HepG2 (cell line): ENCODE measurements at regions of chr5 and their contacts with region 1.

Region 1: DNA sequence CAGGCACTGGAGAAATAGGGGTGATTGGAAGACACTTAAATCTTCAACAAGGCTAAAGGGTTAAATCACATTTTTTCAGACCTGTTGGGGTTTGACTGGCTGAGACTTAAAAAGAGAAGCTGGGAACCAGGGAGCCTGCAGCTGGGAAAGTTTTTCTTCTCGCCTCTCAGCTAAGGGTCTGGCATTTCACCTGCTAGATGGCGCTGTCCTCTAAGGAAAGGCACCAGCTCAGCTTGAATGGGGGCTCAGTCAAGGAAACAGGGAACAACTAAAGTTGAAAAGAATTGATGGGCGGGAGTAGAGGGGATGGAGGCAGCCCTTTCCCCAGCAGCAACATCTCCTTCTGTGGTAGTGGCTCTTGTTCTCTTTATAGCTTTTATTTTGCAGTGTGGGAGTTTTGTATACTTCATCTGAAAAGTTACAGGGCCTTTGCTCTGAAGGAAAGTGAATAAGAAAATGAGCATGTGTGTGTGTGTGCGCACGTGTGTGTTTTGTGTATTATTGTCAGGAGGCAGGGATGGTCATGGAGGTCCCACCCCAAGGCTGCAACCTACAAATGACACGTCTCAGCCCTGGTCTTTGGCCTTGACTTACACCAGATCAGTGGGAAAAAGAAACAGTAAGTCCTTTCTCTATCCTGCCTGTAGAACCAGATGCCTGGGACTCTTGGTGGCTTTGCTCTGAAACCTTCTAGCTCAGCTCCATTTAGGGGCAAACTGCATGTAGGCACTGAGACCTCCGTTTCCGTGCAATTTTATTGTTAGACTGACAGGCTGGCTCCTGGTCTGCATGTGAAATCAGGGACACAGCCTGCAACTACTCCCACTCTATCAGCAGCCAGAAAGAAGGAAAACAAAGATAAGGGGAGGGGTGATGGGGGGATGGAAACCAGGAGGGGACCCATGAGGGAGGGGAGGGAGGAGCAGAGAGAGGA is 316.2 kb upstream of the CLINT1 start:
- DNase-seq: peak; percentile 32
- ATAC-seq: peak; percentile 92
- H3K4me3 ChIP-seq: no peak overlapping the region
- H3K27ac ChIP-seq: no peak overlapping the region
- H3K4me1 ChIP-seq: no peaks in the 10 kb centered on the region
- H3K27me3 ChIP-seq: peaks cover 0 to 6% of the 10 kb centered on the region in 2 experiments; a peak in 1 of 5 replicates
- CTCF ChIP-seq: peak; percentile 86
- EP300 ChIP-seq: no peak
- POLR2A ChIP-seq: no peak
- RAD21 ChIP-seq: peak; percentile 71

Region 2: GRCh38 chr5:158152151-158152550 is 23.0 kb before region 1 on chr5:
- CTCF ChIA-PET with region 1: no interaction called
- POLR2A ChIA-PET with region 1: no interaction called
- in situ Hi-C with region 1: no loop called
- intact Hi-C with region 1: no loop called
- DNase-seq: no peak
- ATAC-seq: no peak
- H3K4me3 ChIP-seq: no peak overlapping the region
- H3K27ac ChIP-seq: no peak overlapping the region
- H3K4me1 ChIP-seq: no peaks in the 10 kb centered on the region
- H3K27me3 ChIP-seq: no peaks in the 10 kb centered on the region; a peak in 1 of 5 replicates
- CTCF ChIP-seq: no peak
- EP300 ChIP-seq: no peak
- POLR2A ChIP-seq: no peak
- RAD21 ChIP-seq: no peak

Region 3: DNA sequence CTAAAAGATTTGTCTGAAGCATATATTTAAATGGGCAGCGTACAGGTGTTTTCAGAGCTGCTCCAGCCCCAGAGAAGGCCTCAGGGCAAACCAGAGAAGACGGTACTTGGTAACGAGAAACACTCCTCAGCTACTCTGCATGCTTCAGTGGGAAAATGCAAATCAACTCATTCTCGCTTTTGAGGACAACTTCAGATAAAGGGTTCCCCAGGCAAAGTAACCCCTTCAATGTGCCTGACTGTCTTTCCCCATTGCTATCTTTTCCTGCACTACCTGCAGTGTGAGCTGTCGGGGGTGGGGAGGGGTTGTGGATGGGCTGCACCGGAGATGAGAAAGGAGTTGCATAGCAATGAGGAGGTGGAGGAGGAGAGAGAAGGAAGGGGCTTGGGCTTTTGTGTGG is 23.5 kb after region 1 on chr5:
- CTCF ChIA-PET with region 1: no interaction called
- POLR2A ChIA-PET with region 1: no interaction called
- in situ Hi-C with region 1: no loop called
- intact Hi-C with region 1: no loop called
- DNase-seq: no peak
- ATAC-seq: no peak
- H3K4me3 ChIP-seq: no peak overlapping the region
- H3K27ac ChIP-seq: no peak overlapping the region
- H3K4me1 ChIP-seq: no peaks in the 10 kb centered on the region
- H3K27me3 ChIP-seq: peaks cover 0 to 2% of the 10 kb centered on the region in 2 experiments; a peak in 2 of 5 replicates
- CTCF ChIP-seq: no peak
- EP300 ChIP-seq: no peak
- POLR2A ChIP-seq: no peak
- RAD21 ChIP-seq: no peak

Region 4: DNA sequence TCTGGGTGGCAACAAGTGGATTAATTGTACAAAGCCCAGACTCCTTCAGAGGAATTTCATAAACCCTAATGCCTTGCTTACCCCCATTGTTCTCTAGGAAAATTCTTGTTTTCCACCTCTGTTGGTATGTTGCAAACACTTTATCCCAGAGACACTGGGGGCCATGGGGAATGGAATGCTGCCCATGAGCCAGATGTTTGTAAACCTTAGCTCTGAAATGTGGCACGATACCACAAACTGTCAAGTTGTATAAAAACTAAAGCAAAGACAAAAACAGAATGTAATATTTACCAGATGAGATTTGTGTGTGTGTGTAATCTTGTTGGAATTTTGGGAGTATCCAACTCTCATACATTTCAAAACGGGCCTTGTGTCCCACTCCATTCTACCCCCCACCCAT is 459.5 kb after region 1 on chr5:
- CTCF ChIA-PET with region 1: no interaction called
- POLR2A ChIA-PET with region 1: no interaction called
- in situ Hi-C with region 1: no loop called
- intact Hi-C with region 1: loop called (anchors 5 kb)
- DNase-seq: no peak
- ATAC-seq: no peak
- H3K4me3 ChIP-seq: no peak overlapping the region
- H3K27ac ChIP-seq: no peak overlapping the region
- H3K4me1 ChIP-seq: no peaks in the 10 kb centered on the region
- H3K27me3 ChIP-seq: no peaks in the 10 kb centered on the region
- CTCF ChIP-seq: no peak
- EP300 ChIP-seq: no peak
- POLR2A ChIP-seq: no peak
- RAD21 ChIP-seq: no peak

Region 5: GRCh38 chr5:158695595-158696330 is 520.6 kb after region 1 on chr5:
- CTCF ChIA-PET with region 1: no interaction called
- POLR2A ChIA-PET with region 1: no interaction called
- in situ Hi-C with region 1: loop called (anchors 10 kb)
- intact Hi-C with region 1: loop called (anchors 1 kb)
- DNase-seq: peak; percentile 20
- ATAC-seq: peak; percentile 89
- H3K4me3 ChIP-seq: no peak overlapping the region
- H3K27ac ChIP-seq: no peak overlapping the region
- H3K4me1 ChIP-seq: no peaks in the 10 kb centered on the region
- H3K27me3 ChIP-seq: peaks cover 0 to 4% of the 10 kb centered on the region in 2 experiments; a peak in 1 of 5 replicates
- CTCF ChIP-seq: peak; percentile 85
- EP300 ChIP-seq: no peak
- POLR2A ChIP-seq: no peak
- RAD21 ChIP-seq: peak; percentile 74

Region 6: GRCh38 chr5:158770506-158770905 is 595.3 kb after region 1 on chr5:
- CTCF ChIA-PET with region 1: interaction called, 11 read pairs
- POLR2A ChIA-PET with region 1: no interaction called
- in situ Hi-C with region 1: no loop called
- intact Hi-C with region 1: no loop called
- DNase-seq: peak; percentile 2
- ATAC-seq: peak; percentile 84
- H3K4me3 ChIP-seq: no peak overlapping the region
- H3K27ac ChIP-seq: no peak overlapping the region
- H3K4me1 ChIP-seq: no peaks in the 10 kb centered on the region
- H3K27me3 ChIP-seq: no peaks in the 10 kb centered on the region
- CTCF ChIP-seq: peak; percentile 54
- EP300 ChIP-seq: no peak
- POLR2A ChIP-seq: no peak
- RAD21 ChIP-seq: no peak

Region 7: DNA sequence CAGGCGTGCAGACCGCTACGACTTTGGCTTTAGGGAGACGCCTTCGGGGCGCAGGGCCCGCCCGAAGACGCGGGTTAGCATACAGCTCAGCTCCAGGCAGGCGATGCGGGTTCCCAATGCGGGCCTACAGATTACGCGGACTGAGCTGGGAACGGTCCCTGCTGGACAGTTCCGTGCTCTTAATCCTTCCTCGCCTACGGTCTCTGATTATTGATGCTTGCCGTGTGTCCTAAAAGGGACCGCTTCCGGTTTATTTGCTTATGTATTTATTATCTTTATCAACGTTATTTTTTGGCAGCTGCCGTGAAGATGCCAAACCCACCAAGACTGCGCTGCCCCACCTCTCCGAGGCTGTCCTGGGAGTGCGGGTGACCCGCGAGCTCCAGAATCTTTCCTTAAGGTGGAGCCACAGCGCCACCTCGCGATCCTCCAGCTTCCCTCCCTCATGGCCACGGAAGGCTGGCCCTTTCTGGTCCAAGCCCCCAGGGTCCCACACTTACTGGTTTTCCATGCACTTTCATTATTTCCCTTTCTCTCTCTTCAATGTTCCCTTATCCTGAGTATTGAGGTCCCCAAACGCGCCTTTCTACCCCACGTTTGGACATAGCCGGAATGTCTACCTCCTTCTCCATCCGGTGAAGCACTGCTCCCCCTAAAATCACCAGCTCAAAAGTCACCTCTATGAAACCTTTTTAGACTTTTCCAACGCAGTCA is 931.5 kb after region 1 on chr5:
- CTCF ChIA-PET with region 1: interaction called, 8 read pairs
- POLR2A ChIA-PET with region 1: no interaction called
- in situ Hi-C with region 1: loop called (anchors 5 kb)
- intact Hi-C with region 1: loop called (anchors 1 kb)
- DNase-seq: peak; percentile 24
- ATAC-seq: peak; percentile 96
- H3K4me3 ChIP-seq: no peak overlapping the region
- H3K27ac ChIP-seq: no peak overlapping the region
- H3K4me1 ChIP-seq: no peaks in the 10 kb centered on the region
- H3K27me3 ChIP-seq: peaks cover 1 to 30% of the 10 kb centered on the region in 2 experiments
- CTCF ChIP-seq: peak; percentile 90
- EP300 ChIP-seq: no peak
- POLR2A ChIP-seq: no peak
- RAD21 ChIP-seq: peak; percentile 87

Region 8: DNA sequence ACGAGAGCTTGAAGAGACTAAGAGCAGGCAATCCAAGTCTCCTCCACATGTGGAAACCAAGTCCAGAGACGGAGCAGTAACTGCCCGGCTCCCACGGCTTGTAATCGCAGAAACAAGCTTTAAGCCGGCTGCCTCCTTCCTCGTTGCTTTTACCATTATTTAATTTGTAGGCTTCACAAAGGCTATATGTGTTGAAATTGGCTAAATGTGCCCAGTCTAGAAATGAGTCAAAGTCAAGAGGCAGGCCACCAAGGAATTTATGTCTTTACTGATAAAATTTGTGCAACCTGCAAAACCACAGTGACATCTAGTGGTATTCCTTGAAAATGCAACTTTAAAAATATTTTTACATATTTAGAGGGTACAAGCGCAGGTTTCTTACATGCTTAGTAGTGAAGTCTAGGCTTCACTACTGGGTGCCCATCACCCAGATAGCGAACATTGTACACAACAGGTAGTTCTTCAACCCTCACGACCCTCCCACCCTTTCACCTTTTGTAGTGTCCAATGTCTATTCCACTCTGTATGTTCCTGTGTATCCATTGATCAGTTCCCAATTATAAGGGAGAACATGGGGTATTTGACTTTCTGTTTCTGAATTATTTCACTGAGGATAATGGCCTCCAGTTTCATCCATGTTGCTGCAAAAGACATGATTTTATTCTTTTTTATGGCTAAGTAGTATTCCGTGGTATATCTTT is 958.0 kb after region 1 on chr5:
- CTCF ChIA-PET with region 1: no interaction called
- POLR2A ChIA-PET with region 1: no interaction called
- in situ Hi-C with region 1: no loop called
- intact Hi-C with region 1: loop called (anchors 10 kb)
- DNase-seq: peak; percentile 27
- ATAC-seq: peak; percentile 50; the same call in 1 of the 3 replicates
- H3K4me3 ChIP-seq: no peak overlapping the region
- H3K27ac ChIP-seq: no peak overlapping the region
- H3K4me1 ChIP-seq: no peaks in the 10 kb centered on the region
- H3K27me3 ChIP-seq: 0 out of 5 replicates have a peak, but pooled peaks cover 0 to 3% of the 10 kb centered on the region in 2 experiments
- CTCF ChIP-seq: peak; percentile 71
- EP300 ChIP-seq: no peak
- POLR2A ChIP-seq: no peak
- RAD21 ChIP-seq: peak; percentile 36; the same call in 1 of the 2 replicates